Breast epithelium (tissue), 4 donors: ENCODE measurements at regions of chr5 and their contacts with region 1.

Region 1: DNA sequence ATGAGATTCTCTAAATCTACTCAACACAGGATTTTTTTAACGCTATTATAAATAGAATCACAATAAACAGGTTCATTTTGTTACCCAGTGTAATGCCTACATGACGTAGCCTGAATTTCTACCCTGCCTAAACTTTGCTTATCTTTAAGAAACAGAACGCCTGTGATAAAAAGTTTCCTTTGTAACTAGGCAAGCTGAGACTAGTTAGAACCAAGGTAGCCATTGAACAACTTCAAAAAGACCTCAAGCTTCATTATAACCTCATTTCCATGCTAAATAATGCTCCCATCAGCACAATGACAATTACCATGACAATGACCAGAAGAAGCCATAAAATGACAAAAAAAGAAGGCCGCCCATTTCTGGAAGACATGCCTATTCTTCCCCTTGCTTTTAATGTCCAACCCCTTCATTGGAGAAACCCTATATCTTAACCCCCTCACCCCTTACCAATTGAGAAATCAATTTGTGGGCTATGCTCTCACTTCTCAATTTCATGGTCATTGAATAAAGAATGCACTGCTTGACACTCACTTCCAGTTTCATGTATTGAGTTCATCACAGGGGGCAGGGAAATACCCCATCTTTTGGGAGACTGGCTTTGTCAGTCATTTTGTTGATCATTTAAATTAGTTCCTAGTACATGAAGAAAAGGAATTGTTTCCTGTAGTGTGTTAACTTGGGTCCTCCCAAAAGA is 276.8 kb downstream of the MCTP1 start:
- DNase-seq: no peak
- H3K4me3 ChIP-seq: no peak overlapping the region
- H3K27ac ChIP-seq: no peak overlapping the region
- H3K4me1 ChIP-seq: no peaks in the 10 kb centered on the region
- H3K27me3 ChIP-seq: no peaks in the 10 kb centered on the region
- CTCF ChIP-seq: no peak
- POLR2A ChIP-seq: no peak

Region 2: DNA sequence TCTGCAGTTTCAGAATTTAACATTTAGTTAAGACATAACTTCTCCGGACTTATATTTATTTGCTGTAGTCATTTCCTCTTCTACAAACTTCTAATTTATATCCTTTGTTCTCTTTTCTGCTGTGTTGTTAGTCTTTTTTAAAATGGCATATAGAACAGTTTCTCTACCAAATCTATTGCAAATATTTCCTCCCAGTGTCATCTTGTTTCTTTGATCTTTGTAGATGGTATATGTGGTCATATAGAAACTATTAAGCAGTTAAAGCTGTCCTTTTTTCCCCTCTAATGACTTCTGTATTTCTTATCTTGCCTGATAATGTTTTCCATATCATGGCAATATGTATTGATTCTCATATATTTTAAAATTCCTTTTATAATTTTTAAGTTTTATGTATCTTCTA is 12.3 kb after region 1 on chr5:
- intact Hi-C with region 1: loop called (anchors 1 kb)
- DNase-seq: no peak
- H3K4me3 ChIP-seq: no peak overlapping the region
- H3K27ac ChIP-seq: no peak overlapping the region
- H3K4me1 ChIP-seq: no peaks in the 10 kb centered on the region
- H3K27me3 ChIP-seq: no peaks in the 10 kb centered on the region
- CTCF ChIP-seq: no peak
- POLR2A ChIP-seq: no peak

Region 3: DNA sequence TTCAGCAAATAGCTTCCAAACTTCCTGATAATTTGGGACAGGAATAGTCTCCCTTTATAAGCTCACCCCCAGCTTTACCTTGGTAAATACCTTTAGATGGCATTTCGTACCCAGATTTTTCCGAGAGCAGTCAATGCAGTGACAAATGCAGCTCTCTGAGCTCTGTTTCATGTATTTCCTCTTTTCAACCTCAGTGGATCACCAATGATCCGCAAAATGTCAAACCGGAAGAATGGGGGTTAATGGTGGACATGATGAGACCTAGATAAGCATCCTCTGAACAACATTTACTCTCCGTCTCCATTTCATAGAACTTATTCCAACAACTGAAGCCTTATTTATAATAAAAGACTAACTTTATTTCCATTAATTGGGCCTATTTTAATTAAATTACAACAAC is 49.6 kb after region 1 on chr5:
- intact Hi-C with region 1: no loop called
- DNase-seq: no peak
- H3K4me3 ChIP-seq: no peak overlapping the region
- H3K27ac ChIP-seq: no peak overlapping the region
- H3K4me1 ChIP-seq: no peaks in the 10 kb centered on the region
- H3K27me3 ChIP-seq: no peaks in the 10 kb centered on the region
- CTCF ChIP-seq: no peak
- POLR2A ChIP-seq: no peak